ENCODE measurements at regions of chr5 and their contacts with region 1.

Region 1: DNA sequence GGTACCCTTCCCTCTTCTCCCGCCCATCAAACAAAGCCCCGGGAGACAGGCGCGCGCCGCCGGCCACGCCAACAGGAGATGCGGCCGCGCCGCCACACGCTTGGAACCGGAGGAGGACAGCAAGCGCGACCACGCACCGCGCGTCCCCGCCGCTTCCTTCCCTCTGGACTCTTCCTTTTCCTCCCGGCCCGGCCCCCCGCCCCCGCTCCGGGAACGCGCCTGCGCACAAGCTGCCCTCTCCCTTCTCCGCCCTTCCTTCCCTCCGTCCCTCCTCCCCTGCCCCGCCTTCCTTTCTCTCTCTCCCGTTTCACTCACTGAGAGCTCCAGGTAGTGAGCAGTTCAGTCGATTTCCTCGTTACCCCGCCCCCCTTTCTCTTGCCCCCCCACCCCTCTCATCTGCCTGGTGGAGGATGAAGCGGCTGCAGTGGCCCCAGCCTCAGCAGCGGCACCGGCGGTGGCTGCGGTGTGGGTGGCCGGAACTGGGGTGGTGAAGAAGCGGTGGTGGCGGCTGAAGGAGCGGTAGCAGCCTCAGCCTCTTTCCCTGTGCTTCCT is at the start of gene RASA1:
- DNase-seq: peak in 3 of 5 donors; percentile 75 to 87 (median 77)
- H3K4me3 ChIP-seq: peak within 1 kb of the TSS; percentile 79 to 83
- H3K4me3 Mint-ChIP-seq: peak within 1 kb of the TSS; percentile 92 to 100 (median 94)
- H3K27ac ChIP-seq: peak within 1 kb of the TSS; percentile 69
- H3K27ac Mint-ChIP-seq: peak within 1 kb of the TSS; percentile 88 to 98 (median 95)
- H3K4me1 ChIP-seq: peaks cover 32% of the 10 kb centered on the region
- H3K4me1 Mint-ChIP-seq: peaks cover 23 to 42% (median 33%) of the 10 kb centered on the region in 4 donors
- H3K27me3 ChIP-seq: no peaks in the 10 kb centered on the region
- H3K27me3 Mint-ChIP-seq: no peaks in the 10 kb centered on the region
- total RNA-seq, gene RASA1: 31.0 to 32.4 TPM

Region 2: DNA sequence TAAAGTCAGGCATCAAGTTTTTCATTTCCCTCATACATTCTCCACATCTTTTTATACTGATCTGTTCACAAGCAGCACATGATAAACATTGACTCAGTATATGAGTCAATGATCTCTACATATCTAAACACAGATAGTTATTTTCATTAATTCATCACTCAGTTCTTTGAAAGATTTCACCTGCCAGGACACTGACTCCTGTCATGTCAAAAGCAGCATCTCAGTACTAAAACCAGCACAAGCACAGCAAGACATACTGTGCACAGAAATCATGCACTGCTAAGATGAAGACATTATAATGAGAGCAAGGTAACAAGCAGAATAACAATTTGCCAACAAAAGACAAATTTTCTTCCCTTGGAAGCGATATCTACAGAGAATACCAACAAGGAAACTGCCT is 856.1 kb before region 1 on chr5:
- CTCF ChIA-PET with region 1: no interaction called
- POLR2A ChIA-PET with region 1: no interaction called
- intact Hi-C with region 1: no loop called
- DNase-seq: no peak
- H3K4me3 ChIP-seq: no peak overlapping the region
- H3K4me3 Mint-ChIP-seq: no peak overlapping the region
- H3K27ac ChIP-seq: no peak overlapping the region
- H3K27ac Mint-ChIP-seq: no peak overlapping the region
- H3K4me1 ChIP-seq: no peaks in the 10 kb centered on the region
- H3K4me1 Mint-ChIP-seq: no peaks in the 10 kb centered on the region
- H3K27me3 ChIP-seq: no peaks in the 10 kb centered on the region
- H3K27me3 Mint-ChIP-seq: no peaks in the 10 kb centered on the region

Region 3: GRCh38 chr5:87020099-87020934 is 247.3 kb before region 1 on chr5:
- CTCF ChIA-PET with region 1: no interaction called
- POLR2A ChIA-PET with region 1: no interaction called
- intact Hi-C with region 1: loop called (anchors 5 kb)
- DNase-seq: peak in 4 of 5 donors; percentile 14 to 36 (median 24)
- H3K4me3 ChIP-seq: no peak overlapping the region
- H3K4me3 Mint-ChIP-seq: peak overlapping the region in 6 of 8 donors; percentile 39 to 69 (median 50)
- H3K27ac ChIP-seq: no peak overlapping the region
- H3K27ac Mint-ChIP-seq: peak overlapping the region in 4 of 7 donors; percentile 53 to 78 (median 65)
- H3K4me1 ChIP-seq: peaks cover 19% of the 10 kb centered on the region
- H3K4me1 Mint-ChIP-seq: peaks cover 18 to 26% (median 21%) of the 10 kb centered on the region in 4 donors
- H3K27me3 ChIP-seq: no peaks in the 10 kb centered on the region
- H3K27me3 Mint-ChIP-seq: no peaks in the 10 kb centered on the region

Region 4: GRCh38 chr5:87081511-87082372 is 185.9 kb before region 1 on chr5:
- CTCF ChIA-PET with region 1: no interaction called
- POLR2A ChIA-PET with region 1: no interaction called
- intact Hi-C with region 1: loop called (anchors 5 kb)
- DNase-seq: peak; percentile 41 to 55 (median 48)
- H3K4me3 ChIP-seq: no peak overlapping the region
- H3K4me3 Mint-ChIP-seq: peak overlapping the region; percentile 63 to 84 (median 76)
- H3K27ac ChIP-seq: no peak overlapping the region
- H3K27ac Mint-ChIP-seq: peak overlapping the region; percentile 42 to 90 (median 81)
- H3K4me1 ChIP-seq: peaks cover 48% of the 10 kb centered on the region
- H3K4me1 Mint-ChIP-seq: peaks cover 31 to 60% (median 43%) of the 10 kb centered on the region in 4 donors
- H3K27me3 ChIP-seq: no peaks in the 10 kb centered on the region
- H3K27me3 Mint-ChIP-seq: no peaks in the 10 kb centered on the region

Region 5: GRCh38 chr5:87137283-87137682 is 130.4 kb before region 1 on chr5:
- CTCF ChIA-PET with region 1: no interaction called
- POLR2A ChIA-PET with region 1: no interaction called
- intact Hi-C with region 1: no loop called
- DNase-seq: no peak
- H3K4me3 ChIP-seq: no peak overlapping the region
- H3K4me3 Mint-ChIP-seq: no peak overlapping the region
- H3K27ac ChIP-seq: no peak overlapping the region
- H3K27ac Mint-ChIP-seq: no peak overlapping the region
- H3K4me1 ChIP-seq: no peaks in the 10 kb centered on the region
- H3K4me1 Mint-ChIP-seq: peaks cover 0 to 4% (median 0%) of the 10 kb centered on the region in 4 donors
- H3K27me3 ChIP-seq: no peaks in the 10 kb centered on the region
- H3K27me3 Mint-ChIP-seq: no peaks in the 10 kb centered on the region

Region 6: DNA sequence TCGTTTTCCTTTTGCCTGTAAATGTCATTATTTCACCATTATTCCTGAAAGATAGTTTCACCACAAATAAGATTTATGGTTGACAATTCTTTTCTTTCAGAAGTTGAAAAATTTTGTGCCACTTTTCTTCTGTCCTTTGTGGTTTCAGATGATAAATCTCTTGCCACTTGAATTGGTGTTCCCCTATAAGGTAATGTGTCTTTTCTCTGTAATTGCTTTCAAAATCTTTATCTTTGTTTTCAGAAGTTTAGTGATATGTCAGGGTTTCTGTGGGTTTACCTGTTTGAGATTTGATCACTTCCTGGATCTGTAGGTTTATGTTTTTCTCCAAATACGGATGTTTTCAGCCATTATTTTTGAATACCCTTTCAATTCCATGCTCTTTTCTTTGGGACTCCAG is 14.6 kb after region 1 on chr5:
- CTCF ChIA-PET with region 1: interaction called, 6 read pairs
- POLR2A ChIA-PET with region 1: interaction called, 26 read pairs
- intact Hi-C with region 1: loop called (anchors 1 kb)
- DNase-seq: peak in 4 of 5 donors; percentile 47 to 64 (median 56)
- H3K4me3 ChIP-seq: peak overlapping the region in 1 of 2 donors; percentile 27
- H3K4me3 Mint-ChIP-seq: peak overlapping the region; percentile 75 to 90 (median 86)
- H3K27ac ChIP-seq: peak overlapping the region; percentile 63
- H3K27ac Mint-ChIP-seq: peak overlapping the region; percentile 71 to 97 (median 92)
- H3K4me1 ChIP-seq: peaks cover 44% of the 10 kb centered on the region
- H3K4me1 Mint-ChIP-seq: peaks cover 37 to 70% (median 50%) of the 10 kb centered on the region in 4 donors
- H3K27me3 ChIP-seq: no peaks in the 10 kb centered on the region
- H3K27me3 Mint-ChIP-seq: no peaks in the 10 kb centered on the region

Region 7: GRCh38 chr5:87400305-87400899 is 132.8 kb after region 1 on chr5:
- CTCF ChIA-PET with region 1: interaction called, 5 read pairs
- POLR2A ChIA-PET with region 1: interaction called, 11 read pairs
- intact Hi-C with region 1: no loop called
- DNase-seq: peak in 4 of 5 donors; percentile 50 to 59 (median 55)
- H3K4me3 ChIP-seq: no peak overlapping the region
- H3K4me3 Mint-ChIP-seq: peak overlapping the region in 2 of 8 donors; percentile 21 to 60
- H3K27ac ChIP-seq: peak overlapping the region; percentile 5
- H3K27ac Mint-ChIP-seq: peak overlapping the region in 5 of 7 donors; percentile 12 to 64 (median 62)
- H3K4me1 ChIP-seq: peaks cover 24% of the 10 kb centered on the region
- H3K4me1 Mint-ChIP-seq: peaks cover 17 to 58% (median 29%) of the 10 kb centered on the region in 4 donors
- H3K27me3 ChIP-seq: no peaks in the 10 kb centered on the region
- H3K27me3 Mint-ChIP-seq: no peaks in the 10 kb centered on the region

Region 8: DNA sequence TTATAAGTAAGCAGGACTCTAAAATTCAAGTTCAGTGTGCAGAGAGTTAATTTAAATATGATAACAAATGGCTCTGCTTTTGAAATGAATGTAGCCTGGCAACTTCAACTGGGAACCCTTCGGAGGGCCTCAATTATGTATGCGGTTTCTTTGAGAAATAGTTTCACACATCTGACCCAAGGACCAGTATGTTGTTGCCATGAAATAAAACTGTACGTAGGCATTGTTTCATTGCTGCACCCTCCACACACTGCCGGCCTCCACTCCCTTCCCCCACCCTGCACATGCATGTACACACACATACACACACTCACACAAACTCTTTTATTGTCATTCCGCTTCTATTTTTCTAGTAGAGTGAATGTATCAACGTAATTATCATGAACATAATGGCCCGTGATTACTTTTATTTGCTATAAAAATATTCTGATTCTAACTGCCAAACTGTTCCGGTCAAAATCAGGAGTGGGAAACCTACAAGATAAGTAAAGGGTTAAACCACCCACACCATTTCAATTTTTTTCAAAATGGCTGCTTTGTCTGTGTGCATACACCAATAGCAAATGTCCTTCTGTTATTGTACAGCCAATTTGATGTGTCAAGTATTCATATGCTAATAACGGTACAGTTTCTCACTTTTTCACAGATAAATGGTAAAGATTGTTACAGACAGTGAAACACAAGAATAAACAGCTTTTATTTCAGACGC is 1216.5 kb after region 1 on chr5:
- CTCF ChIA-PET with region 1: no interaction called
- POLR2A ChIA-PET with region 1: no interaction called
- intact Hi-C with region 1: no loop called
- DNase-seq: no peak
- H3K4me3 ChIP-seq: no peak overlapping the region
- H3K4me3 Mint-ChIP-seq: no peak overlapping the region
- H3K27ac ChIP-seq: no peak overlapping the region
- H3K27ac Mint-ChIP-seq: no peak overlapping the region
- H3K4me1 ChIP-seq: no peaks in the 10 kb centered on the region
- H3K4me1 Mint-ChIP-seq: no peaks in the 10 kb centered on the region
- H3K27me3 ChIP-seq: no peaks in the 10 kb centered on the region
- H3K27me3 Mint-ChIP-seq: peaks cover 4 to 5% of the 10 kb centered on the region in 2 donors

Measured in CD4-positive, alpha-beta memory T cell (primary cell).